ENCODE measurements at regions of chr2 and their contacts with region 1.

Region 1: DNA sequence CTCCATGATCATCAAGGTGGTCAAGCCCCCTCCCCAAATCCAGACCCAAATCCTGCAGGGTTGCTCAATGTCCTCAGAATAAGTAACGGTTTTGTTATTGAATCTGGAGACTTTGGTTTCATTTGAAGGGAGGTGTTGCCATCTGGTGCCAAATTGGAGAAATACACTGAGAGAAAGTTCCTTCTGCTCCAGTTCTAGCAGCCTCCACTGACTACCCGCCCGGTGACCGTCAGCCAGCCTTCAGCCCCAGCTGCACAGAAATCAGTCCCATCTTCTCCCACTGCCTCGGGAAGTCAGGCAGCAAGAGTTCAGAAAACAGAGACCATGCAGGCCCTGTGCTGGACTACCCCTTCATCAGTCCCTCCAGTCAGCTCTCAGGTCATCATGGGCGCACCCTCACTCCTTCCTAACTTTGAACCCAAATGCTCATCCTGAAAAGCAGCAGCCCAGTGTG is 38.7 kb downstream of the PKDCC start:
- DNase-seq: peak in 1 of 2 donors; percentile 48
- ATAC-seq: peak in 6 of 8 donors; percentile 52 to 74 (median 66)
- H3K4me3 ChIP-seq: no peak overlapping the region
- H3K27ac ChIP-seq: no peak overlapping the region
- H3K4me1 ChIP-seq: peaks cover 0 to 32% (median 7%) of the 10 kb centered on the region in 9 donors
- H3K27me3 ChIP-seq: no peaks in the 10 kb centered on the region
- CTCF ChIP-seq: peak; percentile 50 to 88 (median 75)

Region 2: DNA sequence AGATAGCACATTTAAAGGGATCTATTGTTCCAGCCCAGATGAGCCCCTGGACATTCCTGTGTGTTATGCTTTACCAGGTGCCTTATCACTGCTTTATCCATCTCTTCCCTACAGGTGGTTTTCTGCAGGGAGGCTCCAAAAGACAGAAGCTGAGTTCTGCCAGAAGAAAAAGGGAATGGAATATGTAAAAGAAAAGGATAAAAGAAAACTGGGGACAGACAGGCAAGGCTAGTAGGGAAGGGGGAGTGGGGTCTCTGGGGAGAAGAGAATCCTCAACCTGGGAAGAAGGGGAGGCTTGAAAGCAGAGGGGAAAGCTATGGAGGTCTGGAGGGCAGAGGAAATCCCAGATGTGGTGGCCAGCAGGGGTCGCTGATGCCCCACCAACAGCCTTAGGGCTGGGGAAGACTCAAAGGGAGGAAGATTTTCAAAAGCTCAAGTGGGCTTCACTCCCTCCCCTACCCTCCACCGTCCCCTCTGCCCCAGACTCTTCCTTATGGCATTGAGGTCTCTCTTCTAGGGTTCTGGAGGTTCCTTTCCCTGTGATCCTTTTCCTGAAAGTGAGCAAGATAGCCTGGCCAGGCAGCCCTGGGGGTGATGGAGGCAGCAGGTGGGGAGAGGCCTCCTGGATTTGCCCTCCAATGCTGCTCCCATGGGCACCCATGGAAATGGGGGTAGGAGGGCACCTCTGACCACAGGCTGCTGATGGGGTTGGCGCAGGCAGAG is 216.8 kb before region 1 on chr2:
- intact Hi-C with region 1: loop called (anchors 1 to 5 kb)
- DNase-seq: peak; percentile 67 to 85
- ATAC-seq: peak; percentile 85 to 94 (median 89)
- H3K4me3 ChIP-seq: no peak overlapping the region
- H3K27ac ChIP-seq: no peak overlapping the region
- H3K4me1 ChIP-seq: peaks cover 0 to 23% (median 7%) of the 10 kb centered on the region in 9 donors
- H3K27me3 ChIP-seq: no peaks in the 10 kb centered on the region
- CTCF ChIP-seq: peak; percentile 78 to 96 (median 88)

Region 3: DNA sequence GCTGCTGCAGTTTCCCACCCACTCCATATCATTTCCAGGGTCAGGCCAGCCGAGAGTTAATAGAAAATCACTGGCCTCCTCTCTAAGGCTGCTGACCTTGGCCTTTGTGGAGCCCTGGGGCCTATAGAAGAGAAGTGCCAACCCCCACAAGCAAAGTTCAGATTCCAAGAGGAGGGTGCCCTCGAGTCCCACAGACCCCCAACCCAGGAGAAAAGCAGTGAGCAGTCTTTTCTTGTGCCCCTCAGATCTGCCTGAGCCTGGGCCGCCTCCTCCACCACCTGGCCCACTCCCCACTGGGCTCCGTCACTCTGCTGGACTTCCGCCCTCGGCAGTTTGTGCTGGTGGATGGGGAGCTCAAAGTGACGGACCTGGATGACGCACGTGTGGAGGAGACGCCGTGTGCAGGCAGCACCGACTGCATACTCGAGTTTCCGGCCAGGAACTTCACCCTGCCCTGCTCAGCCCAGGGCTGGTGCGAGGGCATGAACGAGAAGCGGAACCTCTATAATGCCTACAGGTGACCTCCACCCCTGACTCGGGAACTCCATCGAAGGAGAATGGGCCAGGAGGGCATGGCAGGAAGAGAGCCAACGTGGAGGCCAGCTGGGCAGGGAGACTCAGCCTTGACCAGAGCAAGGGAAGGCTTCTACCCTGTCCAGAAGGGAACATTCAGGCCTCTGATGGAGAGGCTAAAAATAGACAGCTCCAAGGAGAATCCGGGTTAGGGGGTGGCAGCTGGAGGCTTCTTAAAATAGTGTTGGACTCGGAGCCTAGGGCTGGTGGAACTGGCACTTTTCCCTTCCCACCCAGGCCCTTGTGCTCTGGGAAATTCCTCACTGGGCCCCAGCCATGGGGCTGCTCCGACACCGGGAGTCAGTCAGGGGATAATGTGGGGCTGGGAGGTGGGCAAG is 32.5 kb before region 1 on chr2:
- intact Hi-C with region 1: no loop called
- DNase-seq: peak; percentile 56 to 73
- ATAC-seq: peak; percentile 49 to 89 (median 75)
- H3K4me3 ChIP-seq: peak overlapping the region in 2 of 10 donors; percentile 3 to 87
- H3K27ac ChIP-seq: peak overlapping the region; percentile 81 to 94 (median 91)
- H3K4me1 ChIP-seq: peaks cover 28 to 87% (median 60%) of the 10 kb centered on the region in 9 donors
- H3K27me3 ChIP-seq: peaks cover 0 to 10% (median 0%) of the 10 kb centered on the region in 7 donors
- CTCF ChIP-seq: no peak

Measured in heart right ventricle (tissue), 16 donors.